ENCODE measurements at regions of chr11 and their contacts with region 1.

Region 1: DNA sequence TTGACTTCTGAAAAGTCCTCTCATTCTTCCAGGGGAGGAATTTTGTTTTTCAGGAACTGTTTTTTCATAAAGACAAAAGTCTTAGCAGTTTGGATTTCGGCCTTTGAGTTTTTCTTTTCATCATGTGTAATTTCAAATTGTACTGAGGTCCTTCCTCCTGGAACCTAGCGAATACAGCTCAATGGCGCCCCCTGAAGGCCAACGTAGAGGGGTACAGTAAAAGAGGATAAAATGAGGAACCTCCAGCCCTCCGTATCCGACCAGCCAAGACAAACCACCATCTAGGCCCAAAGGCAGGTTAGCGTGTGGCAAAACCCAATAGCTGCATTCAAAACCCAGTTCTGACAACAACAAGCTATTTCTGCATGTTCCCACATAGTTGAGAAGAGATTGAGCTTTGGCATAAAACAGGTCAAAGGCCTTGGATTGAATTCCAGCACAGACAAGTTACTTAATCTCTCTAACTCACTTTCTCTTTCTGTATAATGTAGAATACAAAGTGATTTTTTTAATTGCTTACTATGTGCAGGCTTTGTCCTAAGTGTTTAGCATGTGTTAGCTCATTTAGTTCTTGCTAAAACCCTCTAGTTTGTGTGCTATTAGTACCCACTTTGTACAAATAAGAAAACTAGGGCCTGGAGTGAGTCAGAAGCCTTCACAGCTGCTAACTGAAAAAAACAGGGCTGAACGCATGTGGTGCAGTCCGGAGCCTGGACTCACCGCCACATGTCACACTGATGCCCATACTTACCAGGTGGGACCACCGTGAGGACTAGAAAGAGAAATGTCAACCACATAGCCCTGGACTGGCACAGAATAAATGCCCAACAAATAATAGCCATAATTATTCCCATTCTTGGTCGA is 43.2 kb upstream of the ETS1 start:
- DNase-seq: peak; percentile 84 to 88 (median 86)
- H3K4me3 ChIP-seq: no peak overlapping the region
- H3K4me3 Mint-ChIP-seq: peak overlapping the region in 7 of 8 donors; percentile 45 to 88 (median 75)
- H3K27ac ChIP-seq: peak overlapping the region; percentile 49
- H3K27ac Mint-ChIP-seq: peak overlapping the region; percentile 92 to 97 (median 93)
- H3K4me1 ChIP-seq: peaks cover 64% of the 10 kb centered on the region
- H3K4me1 Mint-ChIP-seq: peaks cover 49 to 68% (median 59%) of the 10 kb centered on the region in 4 donors
- H3K27me3 ChIP-seq: no peaks in the 10 kb centered on the region
- H3K27me3 Mint-ChIP-seq: no peaks in the 10 kb centered on the region

Region 2: GRCh38 chr11:128026596-128026995 is 604.0 kb before region 1 on chr11:
- CTCF ChIA-PET with region 1: interaction called, 16 read pairs
- POLR2A ChIA-PET with region 1: no interaction called
- intact Hi-C with region 1: loop called (anchors 1 kb)
- DNase-seq: no peak
- H3K4me3 ChIP-seq: no peak overlapping the region
- H3K4me3 Mint-ChIP-seq: no peak overlapping the region
- H3K27ac ChIP-seq: no peak overlapping the region
- H3K27ac Mint-ChIP-seq: no peak overlapping the region
- H3K4me1 ChIP-seq: no peaks in the 10 kb centered on the region
- H3K4me1 Mint-ChIP-seq: peaks cover 0 to 4% (median 1%) of the 10 kb centered on the region in 4 donors
- H3K27me3 ChIP-seq: no peaks in the 10 kb centered on the region
- H3K27me3 Mint-ChIP-seq: peaks cover 3 to 4% of the 10 kb centered on the region in 2 donors

Region 3: GRCh38 chr11:128195057-128195751 is 435.4 kb before region 1 on chr11:
- CTCF ChIA-PET with region 1: interaction called, 21 read pairs
- POLR2A ChIA-PET with region 1: interaction called, 17 read pairs
- intact Hi-C with region 1: loop called (anchors 1 kb)
- DNase-seq: peak; percentile 66 to 78 (median 76)
- H3K4me3 ChIP-seq: no peak overlapping the region
- H3K4me3 Mint-ChIP-seq: peak overlapping the region; percentile 1 to 67 (median 48)
- H3K27ac ChIP-seq: no peak overlapping the region
- H3K27ac Mint-ChIP-seq: peak overlapping the region; percentile 12 to 93 (median 63)
- H3K4me1 ChIP-seq: peaks cover 18% of the 10 kb centered on the region
- H3K4me1 Mint-ChIP-seq: peaks cover 20 to 38% (median 27%) of the 10 kb centered on the region in 4 donors
- H3K27me3 ChIP-seq: no peaks in the 10 kb centered on the region
- H3K27me3 Mint-ChIP-seq: no peaks in the 10 kb centered on the region

Region 4: DNA sequence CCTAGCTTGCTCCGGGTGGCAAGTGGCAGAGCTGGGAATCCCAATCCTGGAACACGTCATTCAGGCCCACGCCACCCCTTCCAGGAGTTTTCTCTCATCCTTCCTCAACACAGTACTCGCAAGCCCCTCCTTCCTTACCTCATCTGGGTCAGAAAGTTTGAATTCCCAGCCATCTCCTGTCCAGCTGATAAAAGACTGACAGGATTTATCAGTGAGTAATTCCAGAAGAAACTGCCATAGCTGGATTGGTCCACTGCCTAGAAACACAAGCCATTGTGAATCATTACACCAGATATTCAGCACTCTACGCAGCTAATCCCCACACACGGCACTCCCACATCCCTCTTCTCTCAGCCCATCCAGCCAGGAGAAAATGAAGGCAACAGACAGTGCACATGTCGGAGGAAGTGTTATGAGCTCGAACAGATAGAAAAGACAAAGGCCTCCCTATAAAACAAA is 167.2 kb before region 1 on chr11:
- CTCF ChIA-PET with region 1: interaction called, 31 read pairs
- POLR2A ChIA-PET with region 1: interaction called, 62 read pairs
- intact Hi-C with region 1: loop called (anchors 1 kb)
- DNase-seq: no peak
- H3K4me3 ChIP-seq: peak overlapping the region in 1 of 2 donors; percentile 3
- H3K4me3 Mint-ChIP-seq: peak overlapping the region; percentile 26 to 93 (median 78)
- H3K27ac ChIP-seq: peak overlapping the region; percentile 94
- H3K27ac Mint-ChIP-seq: peak overlapping the region; percentile 98 to 99 (median 99)
- H3K4me1 ChIP-seq: peaks cover 93% of the 10 kb centered on the region
- H3K4me1 Mint-ChIP-seq: peaks cover 76 to 95% (median 86%) of the 10 kb centered on the region in 4 donors
- H3K27me3 ChIP-seq: no peaks in the 10 kb centered on the region
- H3K27me3 Mint-ChIP-seq: no peaks in the 10 kb centered on the region

Region 5: DNA sequence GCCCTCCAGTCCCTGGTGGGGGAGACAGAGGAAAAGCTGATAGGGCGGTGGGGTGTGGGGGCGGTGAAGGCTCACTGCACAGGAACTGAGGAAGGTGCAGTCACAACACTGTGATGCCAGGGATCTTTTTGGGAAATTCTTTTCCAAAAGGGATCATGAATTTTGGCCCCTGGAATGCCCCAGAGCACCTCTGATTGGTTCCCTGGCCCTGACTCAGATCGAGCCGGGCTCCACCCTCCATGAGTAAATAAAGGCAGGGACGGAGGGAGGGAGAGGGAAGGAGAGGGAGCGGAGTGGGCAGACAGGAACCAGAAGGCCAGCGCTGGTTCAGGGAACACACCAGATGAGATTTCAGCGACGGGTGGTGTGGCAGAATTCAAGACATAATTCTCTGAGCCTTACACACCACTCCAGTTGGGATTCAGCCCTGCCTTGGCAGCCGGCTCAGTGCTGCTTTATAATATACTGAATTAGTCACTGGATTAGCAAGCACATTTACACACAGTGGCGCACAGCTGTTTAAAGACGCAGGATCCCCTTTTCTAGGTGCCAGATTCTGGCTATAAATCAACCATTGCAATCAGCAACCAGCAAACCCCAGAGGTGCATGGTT is 123.5 kb before region 1 on chr11:
- CTCF ChIA-PET with region 1: interaction called, 18 read pairs
- POLR2A ChIA-PET with region 1: interaction called, 949 read pairs
- intact Hi-C with region 1: no loop called
- DNase-seq: peak in 1 of 5 donors; percentile 77
- H3K4me3 ChIP-seq: peak overlapping the region; percentile 37 to 39
- H3K4me3 Mint-ChIP-seq: peak overlapping the region; percentile 81 to 100 (median 94)
- H3K27ac ChIP-seq: peak overlapping the region; percentile 89
- H3K27ac Mint-ChIP-seq: peak overlapping the region; percentile 92 to 99 (median 98)
- H3K4me1 ChIP-seq: peaks cover 100% of the 10 kb centered on the region
- H3K4me1 Mint-ChIP-seq: peaks cover 80 to 100% (median 89%) of the 10 kb centered on the region in 4 donors
- H3K27me3 ChIP-seq: no peaks in the 10 kb centered on the region
- H3K27me3 Mint-ChIP-seq: no peaks in the 10 kb centered on the region

Region 6: GRCh38 chr11:128610721-128611617 is 19.6 kb before region 1 on chr11:
- CTCF ChIA-PET with region 1: interaction called, 89 read pairs
- POLR2A ChIA-PET with region 1: interaction called, 130 read pairs
- intact Hi-C with region 1: loop called (anchors 2 kb)
- DNase-seq: peak; percentile 52 to 67 (median 59)
- H3K4me3 ChIP-seq: peak overlapping the region; percentile 3 to 21
- H3K4me3 Mint-ChIP-seq: peak overlapping the region; percentile 42 to 84 (median 68)
- H3K27ac ChIP-seq: peak overlapping the region; percentile 45
- H3K27ac Mint-ChIP-seq: peak overlapping the region; percentile 80 to 96 (median 92)
- H3K4me1 ChIP-seq: peaks cover 44% of the 10 kb centered on the region
- H3K4me1 Mint-ChIP-seq: peaks cover 31 to 42% (median 38%) of the 10 kb centered on the region in 4 donors
- H3K27me3 ChIP-seq: no peaks in the 10 kb centered on the region
- H3K27me3 Mint-ChIP-seq: no peaks in the 10 kb centered on the region

Measured in CD4-positive, alpha-beta memory T cell (primary cell).